PC-9 (cell line): ENCODE measurements at regions of chr4 and their contacts with region 1.

Region 1: DNA sequence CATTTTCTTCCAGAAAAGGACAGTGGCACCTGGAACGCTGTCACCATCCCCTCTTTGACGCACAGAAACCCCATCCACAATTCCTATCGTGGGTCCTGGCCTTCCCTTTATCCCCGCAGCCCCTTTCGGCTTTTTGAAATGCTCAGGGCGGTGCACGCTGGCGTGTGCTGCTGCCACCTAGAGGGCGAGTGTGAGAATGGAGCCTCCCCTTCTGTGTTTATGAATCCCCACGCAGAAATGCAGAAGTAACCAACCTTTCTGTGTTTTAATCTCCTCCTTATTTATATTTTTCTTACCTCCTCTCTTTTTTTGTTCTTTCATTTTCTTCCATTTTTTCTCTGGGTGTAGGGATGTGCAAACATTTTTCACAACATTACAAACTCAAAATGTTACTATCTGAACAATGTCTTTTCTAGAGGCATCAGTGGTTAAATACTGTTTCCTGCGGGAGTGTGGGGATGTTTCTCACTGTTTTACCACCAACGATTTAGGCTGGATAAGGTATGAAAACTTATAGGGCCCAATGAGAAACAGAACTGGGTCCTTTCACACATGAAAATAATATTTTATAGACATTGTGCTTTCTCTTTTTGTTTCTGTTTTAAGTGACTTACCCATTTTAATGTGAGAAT is 50.0 kb downstream of the TMA16 start:
- DNase-seq: peak in 1 of 2 experiments; percentile 28
- H3K4me3 ChIP-seq: peak overlapping the region; percentile 46; the same call in 1 of the 2 replicates
- H3K27ac ChIP-seq: no peak overlapping the region
- H3K4me1 ChIP-seq: no peaks in the 10 kb centered on the region
- H3K27me3 ChIP-seq: no peaks in the 10 kb centered on the region
- CTCF ChIP-seq: peak; percentile 84

Region 2: GRCh38 chr4:162497564-162498167 is 1046.9 kb before region 1 on chr4:
- CTCF ChIA-PET with region 1: interaction called, 6 read pairs
- POLR2A ChIA-PET with region 1: no interaction called
- intact Hi-C with region 1: loop called (anchors 1 kb)
- DNase-seq: no peak
- H3K4me3 ChIP-seq: no peak overlapping the region
- H3K27ac ChIP-seq: no peak overlapping the region
- H3K4me1 ChIP-seq: no peaks in the 10 kb centered on the region
- H3K27me3 ChIP-seq: no peaks in the 10 kb centered on the region
- CTCF ChIP-seq: peak; percentile 82

Region 3: DNA sequence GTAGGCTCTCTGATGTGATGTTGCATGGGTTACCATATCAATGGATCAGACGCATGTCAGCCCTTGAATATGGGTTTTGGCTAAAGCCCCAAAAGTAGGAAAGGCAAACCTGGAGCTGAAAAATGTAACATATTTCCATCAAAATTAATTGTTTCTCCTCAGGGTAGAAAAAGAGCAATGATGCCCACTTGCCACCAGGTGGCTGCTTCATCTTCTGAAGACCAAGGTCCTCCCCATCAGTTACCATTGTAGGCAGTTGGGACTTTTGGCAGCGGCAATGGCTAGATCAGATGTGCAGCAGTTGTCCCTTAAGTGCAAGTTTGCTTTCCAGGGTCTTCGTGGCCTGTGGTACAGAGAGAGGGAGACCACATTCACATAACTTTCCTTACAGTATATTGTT is 496.1 kb before region 1 on chr4:
- CTCF ChIA-PET with region 1: no interaction called
- POLR2A ChIA-PET with region 1: no interaction called
- intact Hi-C with region 1: loop called (anchors 5 kb)
- DNase-seq: peak in 1 of 2 experiments; percentile 15
- H3K4me3 ChIP-seq: no peak overlapping the region
- H3K27ac ChIP-seq: no peak overlapping the region
- H3K4me1 ChIP-seq: no peaks in the 10 kb centered on the region
- H3K27me3 ChIP-seq: no peaks in the 10 kb centered on the region
- CTCF ChIP-seq: peak; percentile 65

Region 4: GRCh38 chr4:163166041-163166579 is 378.4 kb before region 1 on chr4:
- CTCF ChIA-PET with region 1: no interaction called
- POLR2A ChIA-PET with region 1: no interaction called
- intact Hi-C with region 1: loop called (anchors 10 kb)
- DNase-seq: peak in 1 of 2 experiments; percentile 49
- H3K4me3 ChIP-seq: peak overlapping the region; percentile 82
- H3K27ac ChIP-seq: peak overlapping the region; percentile 71
- H3K4me1 ChIP-seq: peaks cover 17% of the 10 kb centered on the region; the same call in 1 of the 2 replicates
- H3K27me3 ChIP-seq: no peaks in the 10 kb centered on the region
- CTCF ChIP-seq: no peak

Region 5: GRCh38 chr4:163467082-163467770 is 77.3 kb before region 1 on chr4:
- CTCF ChIA-PET with region 1: no interaction called
- POLR2A ChIA-PET with region 1: no interaction called
- intact Hi-C with region 1: no loop called
- DNase-seq: no peak
- H3K4me3 ChIP-seq: no peak overlapping the region
- H3K27ac ChIP-seq: no peak overlapping the region
- H3K4me1 ChIP-seq: no peaks in the 10 kb centered on the region
- H3K27me3 ChIP-seq: no peaks in the 10 kb centered on the region
- CTCF ChIP-seq: no peak

Region 6: GRCh38 chr4:163484906-163485305 is 59.6 kb before region 1 on chr4:
- CTCF ChIA-PET with region 1: no interaction called
- POLR2A ChIA-PET with region 1: no interaction called
- intact Hi-C with region 1: loop called (anchors 1 kb)
- DNase-seq: peak in 1 of 2 experiments; percentile 18
- H3K4me3 ChIP-seq: no peak overlapping the region
- H3K27ac ChIP-seq: no peak overlapping the region
- H3K4me1 ChIP-seq: no peaks in the 10 kb centered on the region
- H3K27me3 ChIP-seq: no peaks in the 10 kb centered on the region
- CTCF ChIP-seq: peak; percentile 69

Region 7: GRCh38 chr4:163598028-163598427 is 53.5 kb after region 1 on chr4:
- CTCF ChIA-PET with region 1: no interaction called
- POLR2A ChIA-PET with region 1: no interaction called
- intact Hi-C with region 1: no loop called
- DNase-seq: no peak
- H3K4me3 ChIP-seq: no peak overlapping the region
- H3K27ac ChIP-seq: no peak overlapping the region
- H3K4me1 ChIP-seq: no peaks in the 10 kb centered on the region
- H3K27me3 ChIP-seq: no peaks in the 10 kb centered on the region
- CTCF ChIP-seq: no peak